ENCODE measurements at regions of chr11 and their contacts with region 1.

Region 1: DNA sequence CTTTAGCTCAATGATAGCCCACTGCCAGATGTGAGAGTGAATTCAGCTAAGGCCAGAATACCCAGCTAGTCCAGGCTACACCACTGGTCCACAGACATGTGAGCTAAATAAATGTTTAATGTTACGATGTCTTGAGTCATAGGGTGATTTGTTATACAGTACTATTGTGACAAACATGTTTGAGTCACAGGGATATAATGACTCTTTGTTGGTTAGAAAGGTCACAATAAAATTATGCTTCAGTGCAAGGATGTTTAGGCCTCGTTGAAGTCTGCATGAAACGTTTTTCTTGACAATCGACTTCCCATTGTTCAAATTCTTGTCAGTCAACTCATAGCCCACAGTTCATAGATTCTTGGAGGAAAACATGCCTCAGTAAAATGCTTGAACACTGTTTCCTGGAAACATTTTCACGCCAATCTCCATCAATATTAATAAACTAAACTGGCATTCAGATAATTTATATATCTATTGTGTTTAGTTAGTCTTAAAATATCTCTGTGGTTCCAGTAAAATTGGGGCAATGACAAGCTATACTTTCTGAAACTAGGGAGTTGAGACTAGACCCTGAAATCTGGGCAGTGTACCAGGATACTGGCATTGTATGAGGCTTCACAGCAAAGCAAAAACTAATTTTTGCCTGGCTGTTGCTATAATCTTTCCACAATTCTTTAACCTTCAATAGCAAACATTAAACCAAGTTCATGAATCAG is 650.8 kb upstream of the KIRREL3 start:
- DNase-seq: peak; percentile 76
- H3K4me3 ChIP-seq: no peak overlapping the region
- H3K27ac ChIP-seq: peak overlapping the region; percentile 50
- H3K4me1 ChIP-seq: peaks cover 15% of the 10 kb centered on the region
- H3K27me3 ChIP-seq: no peaks in the 10 kb centered on the region
- CTCF ChIP-seq: no peak
- POLR2A ChIP-seq: no peak

Region 2: DNA sequence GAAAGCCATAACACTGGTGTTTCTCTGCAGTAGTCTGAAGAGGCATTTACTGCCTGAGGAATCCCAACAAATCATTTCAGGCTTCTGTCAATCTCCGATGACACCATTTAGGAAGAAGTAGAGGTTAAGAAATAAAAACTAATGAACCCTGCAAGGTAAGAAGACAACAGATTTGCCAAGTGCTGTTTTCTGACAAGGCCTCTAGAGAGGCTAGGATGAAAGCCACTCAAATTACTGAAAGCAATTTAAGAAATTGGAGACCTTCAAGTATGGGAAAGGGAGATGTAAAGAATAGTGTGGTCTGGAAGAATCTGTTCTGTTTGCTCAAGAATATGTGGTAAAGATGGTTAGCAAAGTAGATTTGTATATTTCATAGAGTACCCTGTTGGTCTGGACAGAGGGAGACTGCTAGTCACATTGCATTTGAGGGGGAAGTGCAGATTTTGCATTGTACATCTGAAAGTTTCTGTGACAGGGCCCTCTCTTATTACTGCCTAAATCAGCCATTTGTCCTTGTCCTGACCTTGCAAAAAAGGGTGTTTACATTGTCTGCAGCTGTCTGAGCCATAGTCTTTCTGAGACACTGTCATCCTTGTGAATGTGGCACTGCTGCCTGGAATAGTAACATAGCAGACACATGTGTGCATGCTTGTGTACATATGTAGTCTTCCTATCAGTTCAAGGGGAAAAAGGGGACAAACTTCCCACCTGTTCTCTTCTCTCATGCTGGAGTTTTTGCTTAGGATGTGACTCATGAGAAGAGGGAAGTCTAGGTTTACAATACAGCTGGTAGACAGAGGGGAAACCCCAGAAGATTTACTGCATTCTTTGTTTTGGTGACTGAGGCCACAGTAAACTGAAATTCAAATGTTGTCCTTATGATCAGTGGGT is 10.5 kb before region 1 on chr11:
- CTCF ChIA-PET with region 1: interaction called, 3 read pairs
- POLR2A ChIA-PET with region 1: interaction called, 3 read pairs
- dilution Hi-C with region 1: no loop called
- intact Hi-C with region 1: loop called (anchors 1 kb)
- DNase-seq: peak; percentile 93
- H3K4me3 ChIP-seq: no peak overlapping the region
- H3K27ac ChIP-seq: peak overlapping the region; percentile 86
- H3K4me1 ChIP-seq: peaks cover 28% of the 10 kb centered on the region
- H3K27me3 ChIP-seq: no peaks in the 10 kb centered on the region
- CTCF ChIP-seq: no peak
- POLR2A ChIP-seq: no peak

Measured in endothelial cell of umbilical vein (primary cell).